Stomach (tissue), 19 donors: ENCODE measurements at regions of chr1 and their contacts with region 1.

Region 1: GRCh38 chr1:67500413-67500959 is 70.3 kb upstream of the SERBP1 start:
- DNase-seq: peak; percentile 91 to 95
- H3K4me3 ChIP-seq: no peak overlapping the region
- H3K27ac ChIP-seq: no peak overlapping the region
- H3K4me1 ChIP-seq: peaks cover 0 to 6% (median 5%) of the 10 kb centered on the region in 4 donors
- H3K27me3 ChIP-seq: peaks cover 0 to 6% (median 0%) of the 10 kb centered on the region in 3 donors
- CTCF ChIP-seq: peak in 5 of 7 experiments; percentile 88 to 96 (median 92)
- EP300 ChIP-seq: no peak
- POLR2A ChIP-seq: no peak

Region 2: DNA sequence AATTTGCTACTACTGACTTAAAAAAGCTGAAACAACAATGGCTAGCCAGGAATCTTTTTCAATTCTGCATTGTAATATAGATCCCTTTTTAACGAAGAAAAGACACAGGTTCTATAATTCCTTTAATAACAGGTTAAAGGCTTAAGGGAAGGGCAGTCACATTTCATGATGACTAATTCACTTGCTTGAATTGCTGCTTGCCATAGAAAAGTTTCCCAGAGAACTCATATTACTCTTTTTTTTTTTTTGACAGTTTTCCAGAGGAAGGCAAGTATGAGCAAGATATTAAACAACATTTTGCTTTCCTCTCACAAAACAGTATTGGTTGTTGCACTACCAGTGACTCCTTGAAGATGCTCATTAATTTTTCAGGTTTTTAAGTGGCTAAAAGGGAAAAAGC is 273.3 kb before region 1 on chr1:
- intact Hi-C with region 1: loop called (anchors 5 kb)
- DNase-seq: no peak
- H3K4me3 ChIP-seq: no peak overlapping the region
- H3K27ac ChIP-seq: no peak overlapping the region
- H3K4me1 ChIP-seq: peaks cover 0 to 7% (median 0%) of the 10 kb centered on the region in 4 donors
- H3K27me3 ChIP-seq: no peaks in the 10 kb centered on the region
- CTCF ChIP-seq: no peak
- EP300 ChIP-seq: no peak
- POLR2A ChIP-seq: no peak